HepG2 (cell line): ENCODE measurements at regions of chr5 and their contacts with region 1.

Region 1: DNA sequence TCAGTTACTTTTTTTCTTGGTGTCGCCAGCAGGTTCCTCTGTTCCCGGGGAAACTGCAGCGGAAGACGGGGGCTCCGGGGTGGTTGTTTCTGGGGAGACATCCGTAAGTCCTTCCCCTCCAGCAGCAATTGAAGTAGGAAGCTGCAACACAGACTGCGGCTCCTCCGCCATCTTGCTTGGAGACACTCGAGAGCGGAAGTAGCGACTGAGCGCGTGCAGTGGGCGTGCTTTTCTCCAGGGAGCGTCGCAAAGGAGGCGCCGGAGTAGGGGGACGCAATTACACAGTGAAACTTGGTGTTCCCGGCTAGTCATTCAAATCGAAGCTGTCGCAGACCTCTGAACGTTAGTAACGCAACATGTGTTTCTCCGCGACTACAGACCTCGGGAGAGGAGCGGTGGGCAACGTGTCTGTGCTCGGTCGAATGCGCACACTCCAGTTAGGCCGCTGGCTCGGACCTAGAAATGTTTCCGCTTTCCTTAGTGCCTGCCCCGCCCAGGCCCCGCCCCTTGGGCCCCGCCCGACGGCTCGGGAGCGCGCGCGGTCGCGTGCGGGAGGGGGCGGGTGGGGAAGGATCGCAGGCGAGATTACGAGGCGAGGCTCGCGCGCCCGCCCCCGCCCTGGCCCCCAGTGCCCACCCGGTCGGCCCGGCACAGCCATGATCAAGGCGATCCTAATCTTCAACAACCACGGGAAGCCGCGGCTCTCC is at the starts of genes AP3S1 and ATG12:
- DNase-seq: peak; percentile 88
- ATAC-seq: peak; percentile 85
- H3K4me3 ChIP-seq: peak within 1 kb of the TSS; percentile 77 to 98 (median 91)
- H3K27ac ChIP-seq: peak within 1 kb of the TSS; percentile 99
- H3K4me1 ChIP-seq: peaks cover 50% of the 10 kb centered on the region
- H3K27me3 ChIP-seq: no peaks in the 10 kb centered on the region; a peak in 1 of 5 replicates
- CTCF ChIP-seq: 0 out of 2 replicates have a peak, but pooled peaks have one; percentile 10
- EP300 ChIP-seq: no peak
- POLR2A ChIP-seq: peak; percentile 86 to 93
- RAD21 ChIP-seq: peak; percentile 17; the same call in 1 of the 2 replicates
- total RNA-seq, gene AP3S1: 85.9 and 88.8 TPM in 2 replicates
- total RNA-seq, gene ATG12: 45.1 and 46.4 TPM in 2 replicates

Region 2: GRCh38 chr5:115586601-115587048 is 254.9 kb before region 1 on chr5:
- CTCF ChIA-PET with region 1: no interaction called
- POLR2A ChIA-PET with region 1: no interaction called
- in situ Hi-C with region 1: no loop called
- intact Hi-C with region 1: no loop called
- DNase-seq: peak; percentile 4
- ATAC-seq: no peak
- H3K4me3 ChIP-seq: no peak overlapping the region
- H3K27ac ChIP-seq: no peak overlapping the region
- H3K4me1 ChIP-seq: no peaks in the 10 kb centered on the region
- H3K27me3 ChIP-seq: no peaks in the 10 kb centered on the region
- CTCF ChIP-seq: peak; percentile 52
- EP300 ChIP-seq: no peak
- POLR2A ChIP-seq: no peak
- RAD21 ChIP-seq: no peak

Region 3: GRCh38 chr5:115907177-115907576 is 65.6 kb after region 1 on chr5:
- CTCF ChIA-PET with region 1: no interaction called
- POLR2A ChIA-PET with region 1: no interaction called
- in situ Hi-C with region 1: no loop called
- intact Hi-C with region 1: no loop called
- DNase-seq: no peak
- ATAC-seq: no peak
- H3K4me3 ChIP-seq: no peak overlapping the region
- H3K27ac ChIP-seq: no peak overlapping the region
- H3K4me1 ChIP-seq: no peaks in the 10 kb centered on the region
- H3K27me3 ChIP-seq: no peaks in the 10 kb centered on the region
- CTCF ChIP-seq: no peak
- EP300 ChIP-seq: no peak
- POLR2A ChIP-seq: no peak
- RAD21 ChIP-seq: no peak

Region 4: GRCh38 chr5:116068028-116068632 is 226.6 kb after region 1 on chr5:
- CTCF ChIA-PET with region 1: no interaction called
- POLR2A ChIA-PET with region 1: no interaction called
- in situ Hi-C with region 1: loop called (anchors 25 kb)
- intact Hi-C with region 1: loop called (anchors 1 kb)
- DNase-seq: peak; percentile 44
- ATAC-seq: peak; percentile 50; the same call in 1 of the 3 replicates
- H3K4me3 ChIP-seq: no peak overlapping the region
- H3K27ac ChIP-seq: no peak overlapping the region
- H3K4me1 ChIP-seq: no peaks in the 10 kb centered on the region
- H3K27me3 ChIP-seq: no peaks in the 10 kb centered on the region
- CTCF ChIP-seq: peak; percentile 59
- EP300 ChIP-seq: no peak
- POLR2A ChIP-seq: no peak
- RAD21 ChIP-seq: no peak

Region 5: DNA sequence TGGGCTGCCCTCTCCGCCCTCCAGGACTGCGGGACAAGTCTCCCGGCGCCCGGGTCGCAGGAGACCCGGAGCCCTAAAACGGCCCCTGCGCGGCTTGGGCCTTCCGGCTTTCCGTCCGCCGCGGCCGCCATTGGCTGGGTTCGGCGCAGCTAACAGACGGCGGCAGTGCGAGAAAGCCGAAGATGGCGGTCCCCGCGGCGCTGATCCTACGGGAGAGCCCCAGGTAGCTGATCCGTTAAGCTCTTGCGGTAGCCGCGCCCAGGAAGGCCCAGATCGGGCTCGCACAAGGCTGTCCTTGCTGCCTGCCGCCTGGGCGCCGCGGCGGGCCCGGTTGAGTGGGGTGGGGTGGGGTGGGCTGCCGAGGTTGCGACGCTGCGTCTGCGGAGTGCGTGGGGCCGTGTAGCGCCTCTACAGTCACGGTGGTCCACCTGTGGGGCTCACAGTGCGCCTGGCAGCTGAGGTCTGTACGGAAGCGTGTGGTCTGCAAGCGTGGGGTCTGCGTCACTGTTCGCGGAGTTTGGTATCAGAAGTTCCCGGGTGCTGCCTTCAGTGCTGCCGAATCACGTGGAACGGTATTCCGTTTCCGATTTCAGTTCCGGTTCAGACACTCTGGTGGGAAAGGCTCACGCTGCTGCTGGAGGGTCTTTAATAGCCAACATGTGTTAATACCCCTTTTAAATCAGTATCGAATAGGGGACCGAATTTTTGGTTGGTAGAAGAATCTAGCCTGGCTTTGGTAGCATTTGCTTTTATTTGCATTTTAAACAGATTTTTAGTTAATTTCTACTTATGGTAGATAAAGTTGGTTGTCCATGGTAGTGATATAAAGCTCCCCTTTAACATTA is 243.6 kb after region 1 on chr5 and contains the start of gene COMMD10:
- CTCF ChIA-PET with region 1: no interaction called
- POLR2A ChIA-PET with region 1: no interaction called
- in situ Hi-C with region 1: no loop called
- intact Hi-C with region 1: loop called (anchors 5 kb)
- DNase-seq: peak; percentile 78
- ATAC-seq: peak; percentile 95
- H3K4me3 ChIP-seq: peak within 1 kb of the TSS; percentile 89 to 98 (median 98)
- H3K27ac ChIP-seq: peak within 1 kb of the TSS; percentile 89
- H3K4me1 ChIP-seq: peaks cover 47% of the 10 kb centered on the region
- H3K27me3 ChIP-seq: no peaks in the 10 kb centered on the region; a peak in 1 of 5 replicates
- CTCF ChIP-seq: no peak
- EP300 ChIP-seq: no peak
- POLR2A ChIP-seq: peak; percentile 90 to 93
- RAD21 ChIP-seq: peak; percentile 36; the same call in 1 of the 2 replicates
- total RNA-seq, gene COMMD10: 39.3 and 45.9 TPM in 2 replicates